MCF 10A (cell line): ENCODE measurements at regions of chr5 and their contacts with region 1.

Region 1: DNA sequence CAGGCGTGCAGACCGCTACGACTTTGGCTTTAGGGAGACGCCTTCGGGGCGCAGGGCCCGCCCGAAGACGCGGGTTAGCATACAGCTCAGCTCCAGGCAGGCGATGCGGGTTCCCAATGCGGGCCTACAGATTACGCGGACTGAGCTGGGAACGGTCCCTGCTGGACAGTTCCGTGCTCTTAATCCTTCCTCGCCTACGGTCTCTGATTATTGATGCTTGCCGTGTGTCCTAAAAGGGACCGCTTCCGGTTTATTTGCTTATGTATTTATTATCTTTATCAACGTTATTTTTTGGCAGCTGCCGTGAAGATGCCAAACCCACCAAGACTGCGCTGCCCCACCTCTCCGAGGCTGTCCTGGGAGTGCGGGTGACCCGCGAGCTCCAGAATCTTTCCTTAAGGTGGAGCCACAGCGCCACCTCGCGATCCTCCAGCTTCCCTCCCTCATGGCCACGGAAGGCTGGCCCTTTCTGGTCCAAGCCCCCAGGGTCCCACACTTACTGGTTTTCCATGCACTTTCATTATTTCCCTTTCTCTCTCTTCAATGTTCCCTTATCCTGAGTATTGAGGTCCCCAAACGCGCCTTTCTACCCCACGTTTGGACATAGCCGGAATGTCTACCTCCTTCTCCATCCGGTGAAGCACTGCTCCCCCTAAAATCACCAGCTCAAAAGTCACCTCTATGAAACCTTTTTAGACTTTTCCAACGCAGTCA is 7.0 kb upstream of the EBF1 start:
- DNase-seq: peak; percentile 86
- H3K4me3 Mint-ChIP-seq: peak overlapping the region; percentile 64
- H3K27ac Mint-ChIP-seq: peak overlapping the region; percentile 7
- H3K4me1 Mint-ChIP-seq: peaks cover 14% of the 10 kb centered on the region
- H3K27me3 Mint-ChIP-seq: peaks cover 63% of the 10 kb centered on the region
- CTCF ChIP-seq: peak; percentile 100

Region 2: DNA sequence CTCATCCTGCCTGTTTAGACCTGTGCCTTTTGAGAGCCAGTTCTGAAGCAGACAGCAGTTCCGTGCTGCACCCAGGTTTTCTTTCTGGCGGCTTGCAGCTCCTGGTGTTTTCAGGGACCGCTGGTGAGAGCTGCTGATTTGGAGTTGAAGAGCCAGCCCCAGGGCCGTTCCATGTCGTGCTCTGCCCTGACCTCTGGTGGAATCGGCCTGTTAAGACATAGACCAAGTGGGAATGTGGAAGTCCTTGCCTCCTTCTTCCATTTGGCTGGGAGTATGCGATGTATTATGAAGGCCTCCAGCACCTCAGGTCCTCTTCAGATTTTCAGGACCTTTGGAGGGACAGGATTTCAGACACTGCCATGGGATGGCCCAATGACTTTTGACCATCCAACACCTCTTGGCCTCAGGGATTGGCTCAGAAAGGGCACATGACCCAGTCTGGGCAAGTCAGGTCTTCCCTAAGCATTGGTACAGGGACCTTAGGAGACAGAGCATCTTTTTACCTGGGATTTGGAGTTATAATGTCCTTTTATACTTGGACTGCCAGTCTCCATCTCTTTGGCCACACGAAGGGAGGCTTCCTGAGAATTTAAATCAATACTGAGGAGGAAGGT is 1111.7 kb before region 1 on chr5:
- CTCF ChIA-PET with region 1: interaction called, 15 read pairs
- POLR2A ChIA-PET with region 1: no interaction called
- intact Hi-C with region 1: no loop called
- DNase-seq: peak; percentile 84
- H3K4me3 Mint-ChIP-seq: no peak overlapping the region
- H3K27ac Mint-ChIP-seq: no peak overlapping the region
- H3K4me1 Mint-ChIP-seq: peaks cover 10% of the 10 kb centered on the region
- H3K27me3 Mint-ChIP-seq: no peaks in the 10 kb centered on the region
- CTCF ChIP-seq: peak; percentile 85

Region 3: GRCh38 chr5:158074992-158075769 is 1031.5 kb before region 1 on chr5:
- CTCF ChIA-PET with region 1: interaction called, 48 read pairs
- POLR2A ChIA-PET with region 1: interaction called, 5 read pairs
- intact Hi-C with region 1: loop called (anchors 1 kb)
- DNase-seq: peak; percentile 73
- H3K4me3 Mint-ChIP-seq: no peak overlapping the region
- H3K27ac Mint-ChIP-seq: peak overlapping the region; percentile 61
- H3K4me1 Mint-ChIP-seq: peaks cover 7% of the 10 kb centered on the region
- H3K27me3 Mint-ChIP-seq: no peaks in the 10 kb centered on the region
- CTCF ChIP-seq: peak; percentile 91

Region 4: DNA sequence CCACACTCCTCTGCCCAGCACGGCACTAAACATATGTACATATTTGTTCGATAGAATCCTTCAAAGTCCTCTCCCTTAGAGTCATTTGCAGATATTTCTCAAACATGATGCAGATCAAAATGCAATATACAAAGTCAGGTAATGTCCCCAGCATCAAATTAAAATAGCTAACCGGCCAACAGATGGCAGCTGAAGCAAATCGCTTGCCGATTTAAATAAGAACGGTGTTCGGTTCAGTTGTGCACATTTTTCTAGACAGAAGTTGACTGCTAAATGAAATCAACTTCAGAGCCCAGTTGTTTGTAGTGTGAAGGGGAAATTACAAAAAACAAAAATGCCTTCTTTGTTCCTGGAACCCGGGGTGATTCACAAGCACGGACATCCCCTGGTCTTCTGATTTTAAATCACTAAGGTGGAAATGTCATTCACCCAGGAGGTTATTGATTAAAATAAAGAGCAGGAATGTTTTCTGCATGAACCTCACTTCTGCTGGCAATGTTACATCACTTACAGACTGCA is 226.2 kb before region 1 on chr5:
- CTCF ChIA-PET with region 1: interaction called, 8 read pairs
- POLR2A ChIA-PET with region 1: no interaction called
- intact Hi-C with region 1: loop called (anchors 1 kb)
- DNase-seq: no peak
- H3K4me3 Mint-ChIP-seq: no peak overlapping the region
- H3K27ac Mint-ChIP-seq: no peak overlapping the region
- H3K4me1 Mint-ChIP-seq: peaks cover 19% of the 10 kb centered on the region
- H3K27me3 Mint-ChIP-seq: peaks cover 22% of the 10 kb centered on the region
- CTCF ChIP-seq: no peak

Region 5: DNA sequence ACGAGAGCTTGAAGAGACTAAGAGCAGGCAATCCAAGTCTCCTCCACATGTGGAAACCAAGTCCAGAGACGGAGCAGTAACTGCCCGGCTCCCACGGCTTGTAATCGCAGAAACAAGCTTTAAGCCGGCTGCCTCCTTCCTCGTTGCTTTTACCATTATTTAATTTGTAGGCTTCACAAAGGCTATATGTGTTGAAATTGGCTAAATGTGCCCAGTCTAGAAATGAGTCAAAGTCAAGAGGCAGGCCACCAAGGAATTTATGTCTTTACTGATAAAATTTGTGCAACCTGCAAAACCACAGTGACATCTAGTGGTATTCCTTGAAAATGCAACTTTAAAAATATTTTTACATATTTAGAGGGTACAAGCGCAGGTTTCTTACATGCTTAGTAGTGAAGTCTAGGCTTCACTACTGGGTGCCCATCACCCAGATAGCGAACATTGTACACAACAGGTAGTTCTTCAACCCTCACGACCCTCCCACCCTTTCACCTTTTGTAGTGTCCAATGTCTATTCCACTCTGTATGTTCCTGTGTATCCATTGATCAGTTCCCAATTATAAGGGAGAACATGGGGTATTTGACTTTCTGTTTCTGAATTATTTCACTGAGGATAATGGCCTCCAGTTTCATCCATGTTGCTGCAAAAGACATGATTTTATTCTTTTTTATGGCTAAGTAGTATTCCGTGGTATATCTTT is 26.5 kb after region 1 on chr5:
- CTCF ChIA-PET with region 1: interaction called, 33 read pairs
- POLR2A ChIA-PET with region 1: interaction called, 5 read pairs
- intact Hi-C with region 1: loop called (anchors 1 kb)
- DNase-seq: peak; percentile 80
- H3K4me3 Mint-ChIP-seq: no peak overlapping the region
- H3K27ac Mint-ChIP-seq: no peak overlapping the region
- H3K4me1 Mint-ChIP-seq: peaks cover 7% of the 10 kb centered on the region
- H3K27me3 Mint-ChIP-seq: no peaks in the 10 kb centered on the region
- CTCF ChIP-seq: peak; percentile 92